ENCODE measurements at regions of chr4 and their contacts with region 1.

Region 1: GRCh38 chr4:51831133-51831532 is 11.8 kb upstream of the DCUN1D4 start:
- DNase-seq: peak in 1 of 2 experiments; percentile 71
- H3K4me3 ChIP-seq: no peak overlapping the region
- H3K27ac ChIP-seq: no peak overlapping the region
- H3K4me1 ChIP-seq: no peaks in the 10 kb centered on the region
- H3K27me3 ChIP-seq: no peaks in the 10 kb centered on the region
- CTCF ChIP-seq: peak; percentile 64 to 79 (median 75)
- EP300 ChIP-seq: no peak
- POLR2A ChIP-seq: no peak
- RAD21 ChIP-seq: peak; percentile 91 to 92

Region 2: DNA sequence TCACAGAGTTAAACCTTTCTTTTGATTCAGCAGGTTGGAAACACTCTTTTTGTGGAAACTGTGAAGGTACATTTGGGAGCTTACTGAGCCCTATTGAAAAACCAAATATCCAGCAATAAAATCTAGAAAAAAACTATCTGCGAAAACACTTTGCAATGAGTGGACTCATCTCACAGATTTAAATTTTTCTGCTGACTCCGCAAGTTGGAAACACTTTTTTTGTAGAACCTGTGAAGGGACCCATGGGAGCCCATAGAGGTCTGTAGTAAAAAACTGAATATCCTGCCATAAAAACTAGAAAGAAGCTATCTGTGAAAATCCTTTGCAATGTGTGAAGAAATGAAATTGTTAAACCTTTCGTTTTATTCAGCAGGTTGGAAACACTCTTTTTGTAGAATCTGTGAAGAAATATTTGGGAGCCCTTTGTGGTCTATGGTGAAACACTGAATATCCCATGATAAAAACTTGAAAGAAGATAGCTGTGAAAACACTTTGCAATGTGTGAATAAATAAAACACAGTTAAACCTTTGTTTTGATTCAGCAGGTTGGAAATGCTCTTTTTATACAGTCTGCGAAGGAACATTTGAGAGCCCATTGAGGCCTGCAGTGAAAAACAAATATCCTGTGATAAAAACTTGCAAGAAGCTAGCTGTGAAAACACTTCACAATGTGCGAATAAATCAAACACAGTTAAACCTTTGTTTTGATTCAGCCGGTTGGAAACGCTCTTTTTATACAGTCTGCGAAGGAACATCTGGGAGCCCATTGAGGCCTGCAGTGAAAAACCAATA is 10.5 kb before region 1 on chr4:
- CTCF ChIA-PET with region 1: no interaction called
- POLR2A ChIA-PET with region 1: no interaction called
- DNase-seq: no peak
- H3K4me3 ChIP-seq: no peak overlapping the region
- H3K27ac ChIP-seq: no peak overlapping the region
- H3K4me1 ChIP-seq: no peaks in the 10 kb centered on the region
- H3K27me3 ChIP-seq: no peaks in the 10 kb centered on the region
- CTCF ChIP-seq: no peak
- EP300 ChIP-seq: no peak
- POLR2A ChIP-seq: no peak
- RAD21 ChIP-seq: no peak

Region 3: DNA sequence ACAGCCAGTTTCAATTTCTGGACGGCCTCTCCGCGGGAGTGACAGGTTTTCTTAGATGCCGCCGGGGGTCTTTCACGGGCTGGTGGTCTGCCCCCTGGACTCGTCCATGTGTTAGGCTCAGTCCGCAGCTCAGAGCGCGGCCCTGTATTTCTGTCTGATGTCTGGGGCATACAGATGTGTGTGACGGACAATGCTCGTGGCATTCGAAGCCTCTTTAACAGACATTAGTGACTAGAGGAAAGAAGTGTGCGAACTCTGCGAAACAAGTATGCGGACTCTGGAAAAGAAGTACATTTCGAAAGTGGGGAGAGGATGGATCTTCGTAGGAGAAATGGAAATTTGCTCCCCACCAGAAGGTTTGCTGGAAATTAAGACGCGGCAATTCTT is 11.0 kb after region 1 on chr4:
- CTCF ChIA-PET with region 1: interaction called, 12 read pairs
- POLR2A ChIA-PET with region 1: interaction called, 4 read pairs
- DNase-seq: no peak
- H3K4me3 ChIP-seq: peak overlapping the region; percentile 76 to 91 (median 82)
- H3K27ac ChIP-seq: no peak overlapping the region
- H3K4me1 ChIP-seq: peaks cover 0 to 4% (median 2%) of the 10 kb centered on the region in 4 experiments; a peak in 4 of 7 replicates
- H3K27me3 ChIP-seq: peaks cover 0 to 5% (median 4%) of the 10 kb centered on the region in 4 experiments; a peak in 5 of 7 replicates
- CTCF ChIP-seq: no peak
- EP300 ChIP-seq: no peak
- POLR2A ChIP-seq: no peak
- RAD21 ChIP-seq: no peak

Region 4: GRCh38 chr4:51862199-51862598 is 31.1 kb after region 1 on chr4:
- CTCF ChIA-PET with region 1: interaction called, 12 read pairs
- POLR2A ChIA-PET with region 1: interaction called, 7 read pairs
- DNase-seq: no peak
- H3K4me3 ChIP-seq: no peak overlapping the region
- H3K27ac ChIP-seq: no peak overlapping the region
- H3K4me1 ChIP-seq: peaks cover 0 to 4% (median 3%) of the 10 kb centered on the region in 4 experiments; a peak in 4 of 7 replicates
- H3K27me3 ChIP-seq: no peaks in the 10 kb centered on the region
- CTCF ChIP-seq: no peak
- EP300 ChIP-seq: no peak
- POLR2A ChIP-seq: no peak
- RAD21 ChIP-seq: no peak

Measured in H1 (cell line).